CD4-positive, alpha-beta memory T cell (primary cell): ENCODE measurements at regions of chr4 and their contacts with region 1.

Region 1: GRCh38 chr4:87073199-87074120 is 138.6 kb downstream of the AFF1 start:
- DNase-seq: peak; percentile 37 to 57 (median 45)
- H3K4me3 ChIP-seq: peak overlapping the region in 1 of 2 donors; percentile 41
- H3K4me3 Mint-ChIP-seq: peak overlapping the region; percentile 61 to 83 (median 76)
- H3K27ac ChIP-seq: peak overlapping the region; percentile 21
- H3K27ac Mint-ChIP-seq: peak overlapping the region; percentile 20 to 82 (median 74)
- H3K4me1 ChIP-seq: peaks cover 27% of the 10 kb centered on the region
- H3K4me1 Mint-ChIP-seq: peaks cover 42 to 68% (median 54%) of the 10 kb centered on the region in 4 donors
- H3K27me3 ChIP-seq: no peaks in the 10 kb centered on the region
- H3K27me3 Mint-ChIP-seq: no peaks in the 10 kb centered on the region

Region 2: DNA sequence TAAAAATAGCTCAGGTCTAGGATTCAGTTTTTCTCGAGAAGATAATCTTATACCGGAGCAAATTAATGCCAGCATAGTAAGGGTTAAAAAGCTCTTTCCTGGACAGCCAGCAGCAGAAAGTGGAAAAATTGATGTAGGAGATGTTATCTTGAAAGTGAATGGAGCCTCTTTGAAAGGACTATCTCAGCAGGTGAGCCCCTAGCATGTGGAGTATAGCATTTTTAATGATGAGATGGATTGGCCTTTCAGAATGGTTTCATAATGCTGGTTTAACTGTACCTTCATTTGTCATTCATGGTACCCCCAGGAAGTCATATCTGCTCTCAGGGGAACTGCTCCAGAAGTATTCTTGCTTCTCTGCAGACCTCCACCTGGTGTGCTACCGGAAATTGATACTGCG is 303.7 kb before region 1 on chr4:
- CTCF ChIA-PET with region 1: no interaction called
- POLR2A ChIA-PET with region 1: no interaction called
- intact Hi-C with region 1: no loop called
- DNase-seq: no peak
- H3K4me3 ChIP-seq: no peak overlapping the region
- H3K4me3 Mint-ChIP-seq: no peak overlapping the region
- H3K27ac ChIP-seq: no peak overlapping the region
- H3K27ac Mint-ChIP-seq: no peak overlapping the region
- H3K4me1 ChIP-seq: no peaks in the 10 kb centered on the region
- H3K4me1 Mint-ChIP-seq: no peaks in the 10 kb centered on the region
- H3K27me3 ChIP-seq: no peaks in the 10 kb centered on the region
- H3K27me3 Mint-ChIP-seq: peaks cover 2 to 3% of the 10 kb centered on the region in 2 donors

Region 3: GRCh38 chr4:87038837-87039615 is 34.4 kb before region 1 on chr4:
- CTCF ChIA-PET with region 1: interaction called, 3 read pairs
- POLR2A ChIA-PET with region 1: no interaction called
- intact Hi-C with region 1: loop called (anchors 5 kb)
- DNase-seq: no peak
- H3K4me3 ChIP-seq: no peak overlapping the region
- H3K4me3 Mint-ChIP-seq: peak overlapping the region in 2 of 8 donors; percentile 1 to 2
- H3K27ac ChIP-seq: no peak overlapping the region
- H3K27ac Mint-ChIP-seq: peak overlapping the region in 3 of 7 donors; percentile 15 to 69 (median 51)
- H3K4me1 ChIP-seq: peaks cover 51% of the 10 kb centered on the region
- H3K4me1 Mint-ChIP-seq: peaks cover 45 to 85% (median 66%) of the 10 kb centered on the region in 4 donors
- H3K27me3 ChIP-seq: no peaks in the 10 kb centered on the region
- H3K27me3 Mint-ChIP-seq: no peaks in the 10 kb centered on the region

Region 4: DNA sequence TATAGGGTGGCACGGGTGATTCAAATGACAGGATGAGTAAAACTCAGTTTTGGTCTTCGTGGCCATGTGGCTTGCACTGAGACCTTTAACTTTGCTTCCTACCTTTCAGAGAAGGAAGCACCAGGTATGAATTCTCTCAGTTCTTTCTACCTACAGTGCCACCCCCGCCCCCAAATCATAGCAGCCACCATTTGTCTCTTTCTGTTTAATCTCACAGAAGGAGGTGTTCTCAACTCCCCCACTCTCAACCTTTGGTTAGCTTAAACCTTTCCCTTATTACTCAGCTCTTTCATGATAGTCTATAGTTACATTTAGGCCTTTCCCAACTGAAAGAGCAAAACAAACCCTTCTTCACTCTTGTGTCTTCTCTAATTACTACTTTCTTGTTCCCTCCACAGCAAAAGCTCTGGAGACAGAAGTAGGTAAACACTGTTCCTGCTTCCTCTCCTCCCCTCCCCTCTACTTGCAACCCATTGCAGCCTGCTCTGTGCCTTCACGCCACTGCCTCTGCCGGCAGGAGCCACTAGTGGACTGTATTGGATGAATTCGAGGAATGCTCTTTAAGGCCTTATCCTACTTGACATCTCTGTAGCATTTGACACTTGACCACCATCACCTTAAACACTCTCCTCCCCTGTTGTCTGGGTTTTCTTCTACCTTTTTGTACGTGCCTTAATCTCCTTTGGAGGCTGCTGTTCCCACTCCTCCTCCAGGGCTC is 14.9 kb before region 1 on chr4:
- CTCF ChIA-PET with region 1: interaction called, 5 read pairs
- POLR2A ChIA-PET with region 1: interaction called, 3 read pairs
- intact Hi-C with region 1: loop called (anchors 1 kb)
- DNase-seq: peak in 1 of 5 donors; percentile 45
- H3K4me3 ChIP-seq: no peak overlapping the region
- H3K4me3 Mint-ChIP-seq: peak overlapping the region in 4 of 8 donors; percentile 1 to 18 (median 10)
- H3K27ac ChIP-seq: no peak overlapping the region
- H3K27ac Mint-ChIP-seq: peak overlapping the region in 5 of 7 donors; percentile 43 to 77 (median 65)
- H3K4me1 ChIP-seq: peaks cover 54% of the 10 kb centered on the region
- H3K4me1 Mint-ChIP-seq: peaks cover 47 to 80% (median 59%) of the 10 kb centered on the region in 4 donors
- H3K27me3 ChIP-seq: no peaks in the 10 kb centered on the region
- H3K27me3 Mint-ChIP-seq: no peaks in the 10 kb centered on the region

Region 5: DNA sequence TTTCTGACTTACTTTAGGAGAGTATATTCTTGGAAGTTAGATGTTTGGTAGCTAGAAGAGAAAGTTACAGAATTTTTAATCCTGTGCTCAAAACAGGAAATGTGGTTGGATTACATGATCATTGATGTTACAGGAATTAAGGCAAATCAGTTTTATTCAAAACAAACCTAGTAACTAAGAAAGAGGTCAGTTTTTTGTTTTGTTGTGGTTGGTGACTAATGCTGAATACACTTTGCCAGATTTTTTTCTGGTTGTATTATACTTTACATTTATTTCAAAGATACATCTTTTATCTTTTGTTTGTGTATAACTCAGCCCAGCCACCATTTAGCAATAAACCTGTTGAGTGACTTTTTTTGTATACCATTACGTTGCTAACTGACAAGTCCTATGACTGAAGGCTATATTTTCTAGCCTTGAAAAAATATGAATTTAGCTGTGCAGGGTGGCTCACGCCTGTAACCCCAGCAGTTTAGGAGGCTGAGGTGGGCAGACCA is 30.3 kb after region 1 on chr4:
- CTCF ChIA-PET with region 1: no interaction called
- POLR2A ChIA-PET with region 1: interaction called, 3 read pairs
- intact Hi-C with region 1: loop called (anchors 2 kb)
- DNase-seq: peak; percentile 51 to 84 (median 80)
- H3K4me3 ChIP-seq: no peak overlapping the region
- H3K4me3 Mint-ChIP-seq: peak overlapping the region; percentile 30 to 82 (median 75)
- H3K27ac ChIP-seq: peak overlapping the region; percentile 51
- H3K27ac Mint-ChIP-seq: peak overlapping the region; percentile 91 to 97 (median 96)
- H3K4me1 ChIP-seq: peaks cover 48% of the 10 kb centered on the region
- H3K4me1 Mint-ChIP-seq: peaks cover 51 to 67% (median 56%) of the 10 kb centered on the region in 4 donors
- H3K27me3 ChIP-seq: no peaks in the 10 kb centered on the region
- H3K27me3 Mint-ChIP-seq: no peaks in the 10 kb centered on the region